ENCODE measurements at regions of chr20 and their contacts with region 1.

Region 1: GRCh38 chr20:5041433-5041832 is 40.1 kb upstream of the SLC23A2 start:
- DNase-seq: no peak
- H3K4me3 ChIP-seq: no peak overlapping the region
- H3K27ac ChIP-seq: peak overlapping the region in 1 of 59 donors; percentile 44
- H3K27me3 ChIP-seq: no peaks in the 10 kb centered on the region
- CTCF ChIP-seq: no peak

Region 2: GRCh38 chr20:5119435-5120188 is 78.2 kb after region 1 on chr20 and contains the start of gene PCNA:
- intact Hi-C with region 1: no loop called
- DNase-seq: peak; percentile 94 to 98 (median 97)
- H3K4me3 ChIP-seq: peak within 1 kb of the TSS; percentile 68 to 99 (median 91)
- H3K27ac ChIP-seq: peak within 1 kb of the TSS; percentile 30 to 94 (median 86)
- H3K27me3 ChIP-seq: no peaks in the 10 kb centered on the region
- CTCF ChIP-seq: peak in 53 of 56 donors; percentile 27 to 73 (median 49)
- total RNA-seq, gene PCNA: 16.5 to 38.8 (median 26.1) TPM

Region 3: GRCh38 chr20:5261763-5262162 is 220.3 kb after region 1 on chr20:
- intact Hi-C with region 1: loop called in 1 of 2 experiments (anchors 5 kb)
- DNase-seq: no peak
- H3K4me3 ChIP-seq: no peak overlapping the region
- H3K27ac ChIP-seq: no peak overlapping the region
- H3K27me3 ChIP-seq: peaks cover 0 to 8% (median 0%) of the 10 kb centered on the region in 45 donors
- CTCF ChIP-seq: no peak

Measured in dorsolateral prefrontal cortex (tissue), 120 donors.